Cardiac septum (tissue), 1 donor: ENCODE measurements at regions of chr7 and their contacts with region 1.

Region 1: GRCh38 chr7:93551063-93551904 is 23.2 kb downstream of the CALCR start:
- DNase-seq: no peak

Region 2: GRCh38 chr7:93245525-93246432 is 305.5 kb before region 1 on chr7:
- intact Hi-C with region 1: loop called (anchors 5 kb)
- DNase-seq: no peak

Region 3: GRCh38 chr7:93337052-93337451 is 214.2 kb before region 1 on chr7:
- intact Hi-C with region 1: no loop called
- DNase-seq: no peak